ENCODE measurements at regions of chr7 and their contacts with region 1.

Region 1: GRCh38 chr7:54839538-54840213 is 80.7 kb upstream of the SEC61G start:
- DNase-seq: peak; percentile 79 to 92
- ATAC-seq: peak; percentile 66 to 86 (median 81)
- H3K4me3 ChIP-seq: no peak overlapping the region
- H3K27ac ChIP-seq: no peak overlapping the region
- H3K4me1 ChIP-seq: no peaks in the 10 kb centered on the region
- H3K27me3 ChIP-seq: no peaks in the 10 kb centered on the region
- CTCF ChIP-seq: peak; percentile 57

Region 2: DNA sequence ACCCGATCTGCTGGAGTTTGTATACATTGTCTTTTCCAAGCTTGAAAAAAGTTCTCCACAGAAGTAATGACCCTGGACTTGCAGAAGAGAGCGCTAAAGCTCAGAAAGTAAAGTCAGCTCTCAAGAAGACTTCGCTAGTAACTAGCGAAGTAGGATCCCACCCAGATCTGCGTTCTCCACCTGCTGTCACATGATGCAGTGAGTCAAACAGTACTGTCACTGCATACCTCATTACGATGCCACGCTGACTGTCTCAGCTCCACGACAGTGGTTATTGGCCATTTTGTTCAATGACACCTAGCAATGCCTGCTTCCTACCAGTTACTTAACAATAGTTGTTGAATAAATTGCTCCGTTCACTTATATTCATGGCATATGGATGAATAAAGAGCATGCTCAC is 51.0 kb before region 1 on chr7:
- intact Hi-C with region 1: loop called in 1 of 2 experiments (anchors 2 kb)
- DNase-seq: peak in 1 of 2 donors; percentile 25
- ATAC-seq: peak; percentile 87 to 98 (median 97)
- H3K4me3 ChIP-seq: no peak overlapping the region
- H3K27ac ChIP-seq: no peak overlapping the region
- H3K4me1 ChIP-seq: peaks cover 4% of the 10 kb centered on the region
- H3K27me3 ChIP-seq: no peaks in the 10 kb centered on the region
- CTCF ChIP-seq: peak; percentile 74

Region 3: GRCh38 chr7:54811041-54811845 is 28.4 kb before region 1 on chr7:
- intact Hi-C with region 1: no loop called
- DNase-seq: no peak
- ATAC-seq: no peak
- H3K4me3 ChIP-seq: no peak overlapping the region
- H3K27ac ChIP-seq: peak overlapping the region; percentile 5
- H3K4me1 ChIP-seq: peaks cover 8% of the 10 kb centered on the region
- H3K27me3 ChIP-seq: peaks cover 0 to 1% (median 0%) of the 10 kb centered on the region in 3 donors
- CTCF ChIP-seq: no peak

Region 4: DNA sequence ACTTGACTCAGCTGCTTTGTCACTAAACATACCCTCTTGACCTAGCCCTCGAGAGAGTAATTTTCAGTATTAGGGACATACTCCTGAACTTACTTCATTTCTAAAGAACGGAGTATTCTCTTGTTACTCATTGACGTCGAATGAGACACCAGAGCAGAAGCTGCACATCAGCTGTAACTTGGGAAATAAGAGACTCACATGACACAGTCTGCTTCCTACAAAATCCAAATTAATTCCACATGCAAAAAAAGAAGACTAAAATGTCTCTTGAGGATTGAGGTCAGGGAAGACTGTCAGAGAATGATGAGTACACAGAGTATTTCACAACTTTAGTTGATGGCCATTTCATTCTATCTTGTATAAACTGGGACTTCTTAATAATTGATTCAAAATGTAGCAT is 64.5 kb after region 1 on chr7:
- intact Hi-C with region 1: no loop called
- DNase-seq: no peak
- ATAC-seq: peak; percentile 51 to 87 (median 80)
- H3K4me3 ChIP-seq: no peak overlapping the region
- H3K27ac ChIP-seq: no peak overlapping the region
- H3K4me1 ChIP-seq: no peaks in the 10 kb centered on the region
- H3K27me3 ChIP-seq: no peaks in the 10 kb centered on the region
- CTCF ChIP-seq: no peak